ENCODE measurements at regions of chr11 and their contacts with region 1.

Region 1: GRCh38 chr11:134244655-134245054 is 8.5 kb downstream of the THYN1 start:
- DNase-seq: peak in 2 of 3 donors; percentile 52 to 53
- H3K4me3 ChIP-seq: no peak overlapping the region
- H3K27ac ChIP-seq: no peak overlapping the region
- H3K4me1 ChIP-seq: no peaks in the 10 kb centered on the region
- H3K27me3 ChIP-seq: no peaks in the 10 kb centered on the region

Region 2: GRCh38 chr11:134181707-134182106 is 62.9 kb before region 1 on chr11:
- CTCF ChIA-PET with region 1: no interaction called
- POLR2A ChIA-PET with region 1: no interaction called
- DNase-seq: no peak
- H3K4me3 ChIP-seq: no peak overlapping the region
- H3K27ac ChIP-seq: no peak overlapping the region
- H3K4me1 ChIP-seq: no peaks in the 10 kb centered on the region
- H3K27me3 ChIP-seq: no peaks in the 10 kb centered on the region

Region 3: DNA sequence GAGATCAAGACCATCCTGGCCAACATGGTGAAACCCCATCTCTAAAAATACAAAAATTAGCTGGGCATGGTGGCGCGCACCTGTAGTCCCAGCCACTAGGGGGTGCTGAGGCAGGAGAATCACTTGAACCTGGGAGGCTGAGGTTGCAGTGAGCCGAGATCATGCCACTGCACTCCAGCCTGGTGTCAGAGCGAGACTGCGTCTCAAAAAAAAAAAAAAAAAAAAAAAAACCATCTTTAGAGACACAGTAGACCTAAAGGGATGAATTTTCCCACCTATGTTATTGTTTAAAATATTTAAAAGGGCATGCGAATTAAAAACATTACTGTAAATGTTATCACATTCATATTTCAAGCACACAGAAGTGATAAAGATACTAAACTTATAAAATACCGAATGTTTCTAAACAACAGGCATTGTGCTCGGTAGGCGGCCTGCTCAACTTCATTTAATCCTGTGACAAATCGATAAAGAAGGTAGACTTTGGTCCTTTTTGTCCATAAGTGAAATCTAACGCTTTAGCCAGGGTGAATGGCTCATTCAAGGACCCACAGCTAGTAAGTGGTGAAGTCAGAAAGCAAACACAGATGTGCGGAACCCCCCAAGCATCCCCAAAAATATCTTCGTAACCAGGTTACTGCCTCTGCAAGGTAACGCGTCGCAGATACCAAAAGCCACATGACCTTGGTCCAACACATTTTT is 37.0 kb before region 1 on chr11:
- CTCF ChIA-PET with region 1: interaction called, 17 read pairs
- POLR2A ChIA-PET with region 1: no interaction called
- DNase-seq: peak; percentile 36 to 61 (median 58)
- H3K4me3 ChIP-seq: no peak overlapping the region
- H3K27ac ChIP-seq: no peak overlapping the region
- H3K4me1 ChIP-seq: no peaks in the 10 kb centered on the region
- H3K27me3 ChIP-seq: no peaks in the 10 kb centered on the region

Region 4: DNA sequence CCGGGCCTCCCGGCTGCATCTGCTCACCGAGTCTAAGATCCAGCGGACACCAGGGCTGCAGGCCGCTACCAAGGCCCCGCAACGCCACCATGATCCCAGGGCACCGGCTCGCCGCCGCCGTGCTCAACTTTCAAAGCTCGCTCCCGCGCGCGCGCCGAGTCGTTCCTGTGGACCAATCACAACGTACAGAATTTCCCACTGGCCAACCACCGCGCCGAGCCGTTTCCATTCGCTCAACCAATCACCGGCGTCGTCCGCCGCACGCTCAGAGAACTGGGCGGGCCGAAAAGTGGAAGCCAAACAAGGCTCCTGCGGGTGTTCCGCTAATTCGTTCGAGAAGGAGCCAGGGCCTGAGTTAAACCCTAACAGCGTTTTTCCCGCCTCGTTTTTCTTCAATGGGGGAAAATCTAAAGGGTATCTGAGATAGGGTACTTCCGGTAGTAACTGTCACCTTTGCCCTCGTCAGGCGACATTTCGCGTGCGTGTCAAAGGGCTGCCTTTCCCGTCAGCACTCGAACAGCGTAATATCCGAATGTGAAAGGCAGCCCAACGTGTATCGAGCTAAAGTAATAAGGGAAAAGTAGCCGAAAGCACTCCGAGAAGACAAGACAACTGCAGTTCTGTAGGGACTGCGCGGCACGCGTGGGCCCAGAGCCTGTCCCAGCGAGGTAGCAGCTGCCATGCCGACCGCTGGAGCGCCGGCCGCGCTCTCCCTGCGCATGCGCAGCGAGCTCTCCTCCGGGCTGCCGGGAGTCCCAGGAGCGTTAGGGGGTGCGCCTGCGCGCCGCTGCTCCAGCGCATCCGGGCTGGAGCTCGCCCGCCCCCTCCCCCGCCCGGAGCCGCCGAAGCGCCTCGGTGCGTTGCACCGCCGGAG is 20.6 kb before region 1 on chr11 and contains the starts of genes NCAPD3 and VPS26B:
- CTCF ChIA-PET with region 1: interaction called, 12 read pairs
- POLR2A ChIA-PET with region 1: interaction called, 4 read pairs
- DNase-seq: peak; percentile 95 to 98 (median 98)
- H3K4me3 ChIP-seq: peak within 1 kb of the TSS; percentile 67 to 94 (median 85)
- H3K27ac ChIP-seq: peak within 1 kb of the TSS; percentile 90 to 96
- H3K4me1 ChIP-seq: peaks cover 16 to 35% (median 35%) of the 10 kb centered on the region in 4 experiments
- H3K27me3 ChIP-seq: no peaks in the 10 kb centered on the region

Region 5: DNA sequence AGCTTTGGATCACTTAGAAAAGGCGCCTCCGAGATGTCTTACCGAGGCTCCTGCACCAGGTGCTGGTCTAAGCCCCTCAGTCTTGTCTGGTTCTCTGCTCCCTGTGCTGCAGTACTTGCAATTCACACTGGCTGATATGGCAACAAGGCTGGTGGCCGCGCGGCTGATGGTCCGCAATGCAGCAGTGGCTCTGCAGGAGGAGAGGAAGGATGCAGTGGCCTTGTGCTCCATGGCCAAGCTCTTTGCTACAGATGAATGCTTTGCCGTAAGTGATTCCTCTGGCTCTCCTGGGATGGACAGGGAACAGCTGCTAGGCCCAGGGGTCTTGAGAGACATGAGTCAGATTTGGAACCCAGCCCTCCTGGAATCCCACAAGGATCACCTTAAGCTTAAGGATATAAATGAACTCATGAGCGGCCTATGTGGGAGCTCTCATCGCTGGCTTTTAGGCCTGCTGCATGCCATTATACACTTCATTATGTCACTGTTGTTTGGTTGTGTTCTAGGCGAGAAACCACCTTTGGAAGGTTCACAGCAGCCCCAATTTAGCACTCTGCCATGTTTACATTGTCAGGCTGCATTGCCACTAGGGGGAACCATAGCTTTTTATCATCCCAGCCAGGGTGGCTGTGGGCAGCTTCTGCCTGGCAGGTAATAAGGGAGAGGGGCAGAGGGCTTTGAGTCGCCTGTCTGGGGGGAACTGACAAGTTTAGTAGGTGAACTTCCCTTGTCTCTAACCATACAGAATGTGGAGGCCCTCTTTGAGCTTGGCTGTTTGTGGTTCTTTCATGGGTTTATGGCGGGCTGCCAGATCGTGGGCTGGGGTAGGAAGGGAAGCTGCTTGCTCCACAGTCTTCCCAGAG is 17.2 kb after region 1 on chr11:
- CTCF ChIA-PET with region 1: interaction called, 13 read pairs
- POLR2A ChIA-PET with region 1: no interaction called
- DNase-seq: peak in 2 of 3 donors; percentile 45 to 49
- H3K4me3 ChIP-seq: no peak overlapping the region
- H3K27ac ChIP-seq: no peak overlapping the region
- H3K4me1 ChIP-seq: peaks cover 2 to 28% (median 15%) of the 10 kb centered on the region in 4 experiments
- H3K27me3 ChIP-seq: no peaks in the 10 kb centered on the region

Region 6: GRCh38 chr11:134275534-134276395 is 31.1 kb after region 1 on chr11 and contains the start of gene GLB1L3:
- CTCF ChIA-PET with region 1: interaction called, 10 read pairs
- POLR2A ChIA-PET with region 1: no interaction called
- DNase-seq: peak; percentile 68 to 82 (median 82)
- H3K4me3 ChIP-seq: peak within 1 kb of the TSS; percentile 40 to 72 (median 44)
- H3K27ac ChIP-seq: no peak within 1 kb of the TSS
- H3K4me1 ChIP-seq: peaks cover 0 to 22% (median 19%) of the 10 kb centered on the region in 4 experiments
- H3K27me3 ChIP-seq: peaks cover 14 to 94% (median 50%) of the 10 kb centered on the region in 5 experiments